Ovary (tissue), 10 donors: ENCODE measurements at regions of chr7 and their contacts with region 1.

Region 1: GRCh38 chr7:135281363-135281949 is 47.8 kb downstream of the STRA8 start:
- DNase-seq: peak; percentile 72 to 86 (median 78)
- H3K4me3 ChIP-seq: no peak overlapping the region
- H3K27ac ChIP-seq: no peak overlapping the region
- H3K4me1 ChIP-seq: no peaks in the 10 kb centered on the region
- H3K27me3 ChIP-seq: no peaks in the 10 kb centered on the region
- CTCF ChIP-seq: peak; percentile 63 to 94 (median 92)
- EP300 ChIP-seq: no peak
- POLR2A ChIP-seq: no peak

Region 2: DNA sequence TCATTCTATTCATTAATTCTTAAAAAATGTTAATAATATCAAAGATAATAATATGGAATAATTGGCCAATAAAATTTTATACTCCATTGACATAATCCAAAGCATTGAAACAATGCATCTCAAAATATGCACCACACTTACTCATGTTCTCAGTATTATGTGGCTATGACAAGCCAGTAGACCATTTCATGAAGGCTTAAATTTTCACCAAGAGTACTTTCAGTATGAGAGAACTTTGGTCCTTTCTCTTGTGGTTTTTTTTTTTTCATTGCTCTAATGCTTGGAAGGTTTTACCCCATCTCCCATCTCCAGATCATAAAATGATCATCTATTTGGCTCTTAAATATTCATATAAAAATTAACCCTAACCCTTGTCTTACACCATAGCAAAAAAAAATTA is 179.1 kb before region 1 on chr7:
- intact Hi-C with region 1: no loop called
- DNase-seq: no peak
- H3K4me3 ChIP-seq: no peak overlapping the region
- H3K27ac ChIP-seq: no peak overlapping the region
- H3K4me1 ChIP-seq: no peaks in the 10 kb centered on the region
- H3K27me3 ChIP-seq: no peaks in the 10 kb centered on the region
- CTCF ChIP-seq: no peak
- EP300 ChIP-seq: no peak
- POLR2A ChIP-seq: no peak

Region 3: DNA sequence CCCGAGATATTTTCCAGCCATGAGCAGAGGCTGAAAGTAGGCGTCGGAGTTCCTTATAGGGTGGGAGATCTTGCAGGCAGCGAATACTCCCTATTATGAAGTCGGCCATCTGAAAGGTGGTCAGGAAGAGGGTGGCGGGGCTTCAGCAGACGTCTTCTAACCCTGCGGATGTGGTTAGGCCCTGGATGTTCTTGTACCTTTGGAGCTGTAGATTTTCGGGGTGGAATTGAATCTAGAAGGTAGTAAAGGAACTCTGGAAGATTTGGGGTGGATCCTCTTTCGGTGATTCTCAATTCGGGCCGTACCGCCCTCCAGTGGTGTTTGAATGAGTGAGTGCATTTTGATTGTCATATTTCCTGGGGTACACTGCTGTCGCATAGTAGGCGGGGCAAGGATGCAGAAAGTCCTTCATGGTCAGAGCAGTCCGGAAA is 276.9 kb after region 1 on chr7:
- intact Hi-C with region 1: loop called in 3 of 4 experiments (anchors 5 kb)
- DNase-seq: peak; percentile 15 to 53 (median 42)
- H3K4me3 ChIP-seq: peak overlapping the region; percentile 91
- H3K27ac ChIP-seq: peak overlapping the region; percentile 89
- H3K4me1 ChIP-seq: no peaks in the 10 kb centered on the region
- H3K27me3 ChIP-seq: no peaks in the 10 kb centered on the region
- CTCF ChIP-seq: peak in 2 of 3 donors; percentile 18 to 32
- EP300 ChIP-seq: no peak
- POLR2A ChIP-seq: no peak

Region 4: GRCh38 chr7:135645296-135645904 is 363.9 kb after region 1 on chr7:
- intact Hi-C with region 1: loop called in 3 of 4 experiments (anchors 5 to 10 kb)
- DNase-seq: no peak
- H3K4me3 ChIP-seq: no peak overlapping the region
- H3K27ac ChIP-seq: no peak overlapping the region
- H3K4me1 ChIP-seq: no peaks in the 10 kb centered on the region
- H3K27me3 ChIP-seq: no peaks in the 10 kb centered on the region
- CTCF ChIP-seq: peak in 2 of 3 donors; percentile 54 to 59
- EP300 ChIP-seq: no peak
- POLR2A ChIP-seq: no peak